ENCODE measurements at regions of chr5 and their contacts with region 1.

Region 1: GRCh38 chr5:112551419-112552032 is 132.4 kb upstream of the EPB41L4A start:
- DNase-seq: peak; percentile 14
- H3K4me3 Mint-ChIP-seq: no peak overlapping the region
- H3K27ac Mint-ChIP-seq: no peak overlapping the region
- H3K4me1 Mint-ChIP-seq: peaks cover 3% of the 10 kb centered on the region
- H3K27me3 Mint-ChIP-seq: no peaks in the 10 kb centered on the region

Region 2: DNA sequence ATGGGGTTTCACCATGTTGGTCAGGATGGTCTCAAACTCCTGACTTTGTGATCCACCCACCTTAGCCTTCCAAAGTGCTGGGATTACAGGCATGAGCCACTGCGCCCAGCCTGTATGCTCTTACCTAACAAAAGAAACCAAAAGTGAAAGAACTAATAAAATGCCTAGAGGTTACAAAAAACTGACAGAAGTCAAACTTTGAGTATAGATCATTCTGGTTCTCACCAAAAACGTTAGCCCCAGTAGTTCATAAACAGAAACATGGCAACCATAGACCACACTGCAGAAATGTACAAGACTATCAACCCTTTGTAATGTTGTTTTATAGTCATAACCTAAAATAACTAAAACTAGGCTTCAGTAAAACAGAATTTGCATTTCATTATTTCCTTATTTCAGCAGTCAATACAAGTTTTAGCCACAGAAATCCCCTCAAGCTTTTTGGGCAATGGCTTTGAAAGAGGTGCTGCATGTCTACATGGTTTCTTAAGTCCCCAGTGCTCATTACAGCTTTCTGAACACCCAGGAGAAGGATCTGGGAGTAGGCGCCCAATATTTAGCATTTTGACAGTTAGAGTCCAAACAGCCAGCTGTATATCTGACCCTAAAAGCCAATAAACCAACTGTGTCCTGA is 205.0 kb before region 1 on chr5:
- CTCF ChIA-PET with region 1: no interaction called
- POLR2A ChIA-PET with region 1: no interaction called
- intact Hi-C with region 1: no loop called
- DNase-seq: no peak
- H3K4me3 Mint-ChIP-seq: no peak overlapping the region
- H3K27ac Mint-ChIP-seq: no peak overlapping the region
- H3K4me1 Mint-ChIP-seq: no peaks in the 10 kb centered on the region
- H3K27me3 Mint-ChIP-seq: no peaks in the 10 kb centered on the region

Region 3: DNA sequence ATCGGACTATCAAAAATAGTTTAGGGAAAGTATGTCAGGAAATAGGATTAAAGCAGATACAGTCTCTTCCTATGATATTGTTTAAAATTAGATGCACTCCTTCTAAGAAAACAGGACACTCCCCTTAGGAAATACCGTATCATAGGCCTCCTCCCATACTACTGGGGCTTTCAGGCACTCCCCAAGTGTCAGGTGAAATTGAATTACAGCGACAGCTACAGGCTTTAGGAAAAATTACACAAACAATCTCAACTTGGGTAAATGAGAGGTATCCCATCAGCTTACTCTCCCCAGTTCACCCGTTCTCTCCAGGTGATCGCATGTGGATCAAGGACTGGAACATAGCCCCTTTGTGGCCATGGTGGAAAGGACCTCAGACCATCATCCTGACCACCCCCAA is 22.0 kb before region 1 on chr5:
- CTCF ChIA-PET with region 1: no interaction called
- POLR2A ChIA-PET with region 1: no interaction called
- intact Hi-C with region 1: no loop called
- DNase-seq: no peak
- H3K4me3 Mint-ChIP-seq: no peak overlapping the region
- H3K27ac Mint-ChIP-seq: no peak overlapping the region
- H3K4me1 Mint-ChIP-seq: no peaks in the 10 kb centered on the region
- H3K27me3 Mint-ChIP-seq: peaks cover 5% of the 10 kb centered on the region

Region 4: GRCh38 chr5:112757468-112758208 is 206.1 kb after region 1 on chr5:
- CTCF ChIA-PET with region 1: interaction called, 152 read pairs
- POLR2A ChIA-PET with region 1: no interaction called
- intact Hi-C with region 1: loop called (anchors 1 kb)
- DNase-seq: no peak
- H3K4me3 Mint-ChIP-seq: no peak overlapping the region
- H3K27ac Mint-ChIP-seq: no peak overlapping the region
- H3K4me1 Mint-ChIP-seq: no peaks in the 10 kb centered on the region
- H3K27me3 Mint-ChIP-seq: no peaks in the 10 kb centered on the region

Region 5: GRCh38 chr5:112848116-112848811 is 296.7 kb after region 1 on chr5:
- CTCF ChIA-PET with region 1: interaction called, 14 read pairs
- POLR2A ChIA-PET with region 1: no interaction called
- intact Hi-C with region 1: loop called (anchors 5 kb)
- DNase-seq: no peak
- H3K4me3 Mint-ChIP-seq: no peak overlapping the region
- H3K27ac Mint-ChIP-seq: no peak overlapping the region
- H3K4me1 Mint-ChIP-seq: peaks cover 4% of the 10 kb centered on the region
- H3K27me3 Mint-ChIP-seq: no peaks in the 10 kb centered on the region

Region 6: GRCh38 chr5:113330533-113331208 is 779.1 kb after region 1 on chr5:
- CTCF ChIA-PET with region 1: no interaction called
- POLR2A ChIA-PET with region 1: no interaction called
- intact Hi-C with region 1: loop called (anchors 5 kb)
- DNase-seq: no peak
- H3K4me3 Mint-ChIP-seq: no peak overlapping the region
- H3K27ac Mint-ChIP-seq: no peak overlapping the region
- H3K4me1 Mint-ChIP-seq: peaks cover 13% of the 10 kb centered on the region
- H3K27me3 Mint-ChIP-seq: no peaks in the 10 kb centered on the region

Region 7: DNA sequence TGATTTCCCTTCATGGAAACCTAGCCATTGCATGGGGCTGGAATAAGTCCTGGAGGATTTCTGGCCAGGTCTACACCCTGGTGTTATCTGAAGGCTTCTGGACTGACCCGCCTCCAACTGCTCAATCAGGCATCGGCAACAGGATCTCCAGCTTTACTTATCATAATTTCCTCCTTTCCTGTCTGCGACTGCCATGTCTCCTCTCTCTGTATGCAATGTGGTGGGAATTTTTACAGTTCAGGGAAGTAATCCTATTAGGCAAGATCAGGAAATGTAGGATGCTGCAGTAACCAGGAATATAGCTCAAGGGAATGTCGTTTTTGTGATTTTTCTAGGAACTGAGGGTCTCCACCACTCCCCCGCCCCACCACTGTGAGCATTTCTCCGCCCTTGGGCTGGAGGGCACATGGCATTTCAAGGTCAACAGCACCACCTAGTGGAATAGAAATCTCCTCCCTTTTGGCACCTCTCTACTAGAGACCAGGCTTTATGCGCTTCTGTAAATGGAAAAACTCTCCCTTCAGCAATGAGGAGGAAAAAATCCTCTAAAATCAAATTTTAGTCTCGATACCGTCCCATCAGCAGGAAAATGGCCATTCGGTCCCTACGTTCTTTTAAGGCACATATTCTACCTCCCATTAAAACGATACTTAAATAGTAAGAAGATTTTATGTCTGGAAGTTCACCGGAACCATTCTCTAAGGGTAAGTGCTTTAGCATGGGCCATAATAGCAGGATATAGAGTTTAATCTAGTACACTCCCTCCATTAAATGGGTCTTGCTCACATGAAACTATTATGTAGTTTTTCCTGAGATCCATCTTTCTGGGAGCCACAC is 1055.0 kb after region 1 on chr5:
- CTCF ChIA-PET with region 1: no interaction called
- POLR2A ChIA-PET with region 1: no interaction called
- intact Hi-C with region 1: loop called (anchors 5 kb)
- DNase-seq: peak; percentile 44
- H3K4me3 Mint-ChIP-seq: no peak overlapping the region
- H3K27ac Mint-ChIP-seq: no peak overlapping the region
- H3K4me1 Mint-ChIP-seq: peaks cover 3% of the 10 kb centered on the region
- H3K27me3 Mint-ChIP-seq: peaks cover 12% of the 10 kb centered on the region

Measured in activated CD4-positive, alpha-beta memory T cell treated with anti-CD3 and anti-CD28 coated beads for 36 hours (primary cell).